ENCODE measurements at regions of chr14 and their contacts with region 1.

Region 1: GRCh38 chr14:74905375-74906142 is 17.5 kb downstream of the RPS6KL1 start:
- DNase-seq: peak; percentile 84
- ATAC-seq: peak; percentile 58
- H3K4me3 Mint-ChIP-seq: no peak overlapping the region
- H3K27ac Mint-ChIP-seq: 0 out of 2 replicates have a peak overlapping the region, but pooled peaks have one; percentile 41
- H3K4me1 Mint-ChIP-seq: peaks cover 13% of the 10 kb centered on the region
- H3K27me3 Mint-ChIP-seq: no peaks in the 10 kb centered on the region
- CTCF ChIP-seq: peak; percentile 95

Region 2: DNA sequence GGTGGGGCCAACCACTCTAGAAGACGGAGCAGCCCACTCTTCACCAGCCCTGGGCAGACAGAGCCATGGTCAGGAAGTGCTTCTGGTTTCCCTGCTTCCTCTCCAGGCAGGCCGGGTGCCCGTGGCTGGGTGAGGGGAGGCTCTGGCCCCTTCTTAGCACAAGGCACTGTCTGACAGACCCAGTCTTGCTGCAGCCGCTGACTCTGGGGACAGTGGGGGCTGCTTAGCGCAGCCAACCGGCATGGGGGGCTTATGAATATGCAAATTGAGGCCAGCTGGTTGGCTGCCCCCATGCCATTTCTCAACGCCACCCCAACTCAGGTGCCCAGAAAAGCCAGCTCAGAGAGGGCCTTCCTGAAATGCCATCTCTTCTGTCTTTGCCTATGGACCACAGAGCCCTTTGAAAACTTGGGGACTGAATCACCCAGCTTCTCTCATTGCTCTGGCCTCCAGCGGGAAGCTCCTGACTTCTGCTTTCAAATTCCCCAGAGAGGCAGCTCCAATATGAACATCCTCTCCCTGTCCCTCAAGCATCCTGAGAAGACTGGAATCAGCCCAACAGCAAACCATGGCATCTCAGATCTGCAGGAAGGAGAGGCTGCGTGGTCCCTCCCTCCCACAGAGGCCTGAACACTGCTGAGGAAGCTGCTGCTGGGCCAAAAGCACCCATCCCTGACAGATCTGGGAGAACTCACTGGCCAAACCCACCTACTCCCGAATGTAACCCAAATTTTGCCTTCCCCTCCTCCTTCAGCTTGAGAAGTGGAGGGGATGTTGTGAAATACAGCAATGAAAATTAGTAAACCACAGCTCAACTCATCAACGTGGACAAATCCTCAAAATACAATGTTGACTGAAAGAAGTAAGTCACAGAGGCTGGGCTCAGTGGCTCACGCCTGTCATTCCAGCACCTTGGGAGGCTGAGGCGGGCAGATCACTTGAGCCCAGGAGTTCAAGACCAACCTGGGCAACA is 29.3 kb before region 1 on chr14 and contains the start of gene PROX2:
- CTCF ChIA-PET with region 1: interaction called, 29 read pairs
- POLR2A ChIA-PET with region 1: interaction called, 3 read pairs
- DNase-seq: peak; percentile 28
- ATAC-seq: peak; percentile 71
- H3K4me3 Mint-ChIP-seq: no peak within 1 kb of the TSS
- H3K27ac Mint-ChIP-seq: no peak within 1 kb of the TSS
- H3K4me1 Mint-ChIP-seq: peaks cover 16% of the 10 kb centered on the region
- H3K27me3 Mint-ChIP-seq: no peaks in the 10 kb centered on the region
- CTCF ChIP-seq: no peak
- total RNA-seq, gene PROX2: 0.04 to 0.27 TPM in 2 of 3 replicates, not detected in the other

Region 3: GRCh38 chr14:74888164-74889158 is 17.1 kb before region 1 on chr14:
- CTCF ChIA-PET with region 1: interaction called, 36 read pairs
- POLR2A ChIA-PET with region 1: interaction called, 7 read pairs
- DNase-seq: no peak
- ATAC-seq: no peak
- H3K4me3 Mint-ChIP-seq: no peak overlapping the region
- H3K27ac Mint-ChIP-seq: peak overlapping the region; percentile 96
- H3K4me1 Mint-ChIP-seq: peaks cover 49% of the 10 kb centered on the region
- H3K27me3 Mint-ChIP-seq: no peaks in the 10 kb centered on the region
- CTCF ChIP-seq: no peak

Region 4: GRCh38 chr14:74917646-74918081 is 12.1 kb after region 1 on chr14:
- CTCF ChIA-PET with region 1: interaction called, 62 read pairs
- POLR2A ChIA-PET with region 1: no interaction called
- DNase-seq: no peak
- ATAC-seq: no peak
- H3K4me3 Mint-ChIP-seq: no peak overlapping the region
- H3K27ac Mint-ChIP-seq: 0 out of 2 replicates have a peak overlapping the region, but pooled peaks have one; percentile 57
- H3K4me1 Mint-ChIP-seq: peaks cover 9% of the 10 kb centered on the region
- H3K27me3 Mint-ChIP-seq: 0 out of 2 replicates have a peak, but pooled peaks cover 3% of the 10 kb centered on the region
- CTCF ChIP-seq: no peak

Region 5: DNA sequence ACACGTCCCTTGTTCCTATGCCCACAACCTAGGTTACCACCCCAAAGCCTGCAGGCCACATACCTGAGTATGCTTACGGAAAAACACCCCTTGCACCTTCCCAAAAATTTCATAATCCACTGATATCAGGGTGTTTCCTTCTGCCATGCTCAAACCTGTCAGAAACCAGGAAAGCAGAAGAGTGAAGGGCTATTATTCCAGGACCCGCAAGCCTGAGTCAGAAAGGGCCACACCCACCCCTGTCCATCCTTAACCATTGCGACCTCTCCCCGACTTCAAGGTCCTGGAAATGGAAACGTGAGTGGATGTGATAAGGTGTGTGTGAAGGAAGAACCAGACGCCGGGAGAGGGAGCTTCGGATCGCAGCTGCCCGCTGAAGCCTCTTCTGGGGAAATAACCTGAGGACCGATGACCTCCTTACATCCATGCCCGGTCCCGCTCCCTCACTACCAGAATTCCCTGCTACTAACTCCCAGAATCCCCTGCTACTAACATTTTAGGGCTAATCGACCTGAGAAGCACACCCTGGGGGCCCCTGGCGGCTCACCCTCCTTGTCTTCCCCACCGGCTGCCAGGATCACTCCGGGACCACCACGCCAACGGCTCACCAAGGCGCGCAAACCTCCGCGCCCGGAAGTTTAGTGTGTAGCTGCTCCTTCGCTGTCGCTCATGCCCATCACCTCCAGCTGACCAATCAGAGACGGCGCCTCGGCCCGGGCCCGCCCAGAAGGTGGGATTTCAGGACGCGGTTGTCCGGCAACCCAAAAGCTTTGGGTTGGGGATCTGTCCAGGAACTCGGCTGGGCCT is 158.1 kb after region 1 on chr14 and contains the start of gene ACYP1:
- CTCF ChIA-PET with region 1: interaction called, 23 read pairs
- POLR2A ChIA-PET with region 1: no interaction called
- DNase-seq: peak; percentile 97
- ATAC-seq: peak; percentile 98
- H3K4me3 Mint-ChIP-seq: peak within 1 kb of the TSS; percentile 96
- H3K27ac Mint-ChIP-seq: peak within 1 kb of the TSS; percentile 79
- H3K4me1 Mint-ChIP-seq: peaks cover 14% of the 10 kb centered on the region
- H3K27me3 Mint-ChIP-seq: no peaks in the 10 kb centered on the region
- CTCF ChIP-seq: no peak
- total RNA-seq, gene ACYP1: 22.4 to 26.6 TPM (median 23.0 TPM) in 3 replicates

Measured in WTC11 (cell line).